ENCODE measurements at regions of chr12 and their contacts with region 1.

Region 1: DNA sequence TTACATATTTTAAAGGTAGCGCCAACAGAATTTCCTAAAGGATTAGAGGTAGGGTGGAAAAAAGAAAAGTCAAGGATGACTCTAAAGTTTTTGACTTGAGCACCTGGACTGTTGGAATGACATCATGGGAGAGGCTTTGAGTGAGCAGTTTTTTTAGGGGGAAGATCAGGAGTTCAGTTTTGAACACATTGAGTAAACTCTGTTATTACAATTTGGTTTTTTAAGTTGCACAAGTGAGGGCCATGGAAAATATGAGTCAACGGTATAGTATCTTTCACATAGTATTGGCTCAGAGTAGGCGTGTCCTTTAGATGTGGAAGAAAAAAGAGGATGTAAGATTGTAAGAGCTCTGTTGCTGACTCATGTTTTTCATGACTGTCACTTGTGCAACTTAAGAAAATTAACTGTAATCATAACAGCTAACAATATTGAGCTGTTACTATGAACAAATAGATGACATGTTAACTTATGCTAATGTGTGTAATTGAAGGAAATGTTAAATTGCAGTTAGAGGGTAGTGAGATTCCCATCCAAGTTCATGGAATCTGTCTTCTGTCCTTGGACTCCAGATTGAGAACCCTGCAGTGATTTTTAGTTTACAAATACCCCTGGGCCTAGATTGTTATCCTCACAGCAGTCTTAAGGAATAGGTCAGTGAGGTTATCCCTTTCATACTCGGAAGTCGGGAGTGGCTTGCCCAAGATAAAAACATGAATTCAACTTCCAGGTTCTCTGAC is 48.1 kb upstream of the ATP2B1 start:
- DNase-seq: peak; percentile 99
- H3K4me3 ChIP-seq: no peak overlapping the region
- H3K27ac ChIP-seq: peak overlapping the region; percentile 99
- H3K4me1 ChIP-seq: peaks cover 18% of the 10 kb centered on the region
- H3K27me3 ChIP-seq: no peaks in the 10 kb centered on the region
- CTCF ChIP-seq: no peak

Region 2: DNA sequence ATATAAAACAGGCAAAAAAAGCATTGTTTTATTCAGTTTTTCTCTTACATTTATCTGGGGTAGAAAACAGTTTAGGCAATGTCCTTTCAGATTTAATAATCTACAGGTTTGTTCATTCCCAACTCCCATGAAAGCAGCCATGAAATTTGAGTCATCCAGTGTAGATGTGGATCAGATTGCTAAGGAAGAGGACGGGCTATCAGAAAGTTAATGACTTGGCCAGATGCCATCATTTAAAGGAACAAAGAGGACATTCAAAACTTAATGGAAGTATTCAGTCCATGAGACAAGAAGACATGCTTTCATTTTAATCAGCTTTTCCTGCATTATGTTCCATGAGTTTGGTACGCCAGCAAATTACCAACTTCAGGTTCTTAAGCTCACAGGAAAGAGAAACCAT is 199.8 kb before region 1 on chr12:
- CTCF ChIA-PET with region 1: no interaction called
- dilution Hi-C with region 1: no loop called
- in situ Hi-C with region 1: no loop called
- intact Hi-C with region 1: no loop called
- DNase-seq: peak; percentile 69
- H3K4me3 ChIP-seq: no peak overlapping the region
- H3K27ac ChIP-seq: no peak overlapping the region
- H3K4me1 ChIP-seq: peaks cover 8% of the 10 kb centered on the region
- H3K27me3 ChIP-seq: no peaks in the 10 kb centered on the region
- CTCF ChIP-seq: no peak

Region 3: DNA sequence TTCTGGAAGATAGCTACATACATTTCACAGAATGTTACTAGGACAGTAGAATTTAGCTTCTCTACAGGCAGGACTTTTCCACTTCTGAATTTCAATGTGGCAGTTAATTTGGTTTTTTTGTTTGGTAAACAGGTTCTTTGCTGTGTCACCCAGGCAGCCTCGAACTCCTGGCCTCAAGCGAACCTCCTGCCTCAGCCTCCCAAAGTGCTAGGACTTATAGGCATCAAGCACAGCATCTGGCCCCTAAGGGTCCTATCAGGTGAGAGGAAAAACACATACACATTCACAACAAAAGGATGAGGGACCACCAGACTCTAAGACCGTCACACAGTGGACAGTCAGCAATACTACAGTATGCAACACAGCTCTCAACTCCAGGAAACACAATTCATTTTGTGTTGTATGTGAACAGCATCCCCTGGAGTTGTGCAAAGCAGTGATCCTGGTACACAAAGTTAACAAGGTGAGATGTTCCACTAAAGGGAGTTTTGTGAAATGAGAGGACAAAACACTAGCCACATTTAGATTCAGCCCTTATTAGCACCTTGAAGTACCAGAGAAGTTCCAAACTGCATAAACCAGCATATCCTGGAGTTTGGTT is 55.0 kb before region 1 on chr12:
- CTCF ChIA-PET with region 1: no interaction called
- dilution Hi-C with region 1: no loop called
- in situ Hi-C with region 1: no loop called
- intact Hi-C with region 1: no loop called
- DNase-seq: no peak
- H3K4me3 ChIP-seq: no peak overlapping the region
- H3K27ac ChIP-seq: no peak overlapping the region
- H3K4me1 ChIP-seq: peaks cover 12% of the 10 kb centered on the region
- H3K27me3 ChIP-seq: no peaks in the 10 kb centered on the region
- CTCF ChIP-seq: no peak

Region 4: DNA sequence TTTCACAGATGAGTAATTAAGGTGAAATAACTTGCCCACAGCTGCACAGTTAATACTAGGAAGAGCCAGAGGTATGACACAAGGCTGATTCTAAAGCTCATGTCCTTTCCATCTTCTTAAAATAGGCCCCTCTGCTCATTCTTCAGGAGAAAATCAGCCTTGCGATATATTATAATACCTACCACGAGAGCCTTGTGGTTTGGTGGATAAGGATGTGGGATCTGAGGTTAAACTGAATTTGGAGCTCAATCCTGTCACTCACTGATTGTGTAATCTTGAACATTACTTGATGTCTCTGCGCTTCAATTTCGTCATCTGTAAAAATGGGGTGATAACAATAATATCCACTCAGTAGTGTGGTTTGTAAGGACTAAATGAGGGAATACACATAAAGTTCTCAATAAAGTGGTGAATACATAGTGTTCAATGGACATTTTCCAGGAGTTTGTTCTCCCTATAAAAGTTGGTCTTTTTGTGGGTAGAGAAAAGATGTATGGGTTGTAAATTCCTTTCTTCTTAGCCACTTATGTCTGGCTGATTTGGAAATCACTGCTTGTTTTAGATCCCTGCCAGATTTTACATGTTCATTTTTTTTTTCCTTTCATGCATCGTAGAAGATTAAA is 23.1 kb before region 1 on chr12:
- CTCF ChIA-PET with region 1: no interaction called
- dilution Hi-C with region 1: no loop called
- in situ Hi-C with region 1: no loop called
- intact Hi-C with region 1: loop called (anchors 1 kb)
- DNase-seq: peak; percentile 96
- H3K4me3 ChIP-seq: no peak overlapping the region
- H3K27ac ChIP-seq: peak overlapping the region; percentile 81
- H3K4me1 ChIP-seq: peaks cover 25% of the 10 kb centered on the region
- H3K27me3 ChIP-seq: no peaks in the 10 kb centered on the region
- CTCF ChIP-seq: no peak

Region 5: DNA sequence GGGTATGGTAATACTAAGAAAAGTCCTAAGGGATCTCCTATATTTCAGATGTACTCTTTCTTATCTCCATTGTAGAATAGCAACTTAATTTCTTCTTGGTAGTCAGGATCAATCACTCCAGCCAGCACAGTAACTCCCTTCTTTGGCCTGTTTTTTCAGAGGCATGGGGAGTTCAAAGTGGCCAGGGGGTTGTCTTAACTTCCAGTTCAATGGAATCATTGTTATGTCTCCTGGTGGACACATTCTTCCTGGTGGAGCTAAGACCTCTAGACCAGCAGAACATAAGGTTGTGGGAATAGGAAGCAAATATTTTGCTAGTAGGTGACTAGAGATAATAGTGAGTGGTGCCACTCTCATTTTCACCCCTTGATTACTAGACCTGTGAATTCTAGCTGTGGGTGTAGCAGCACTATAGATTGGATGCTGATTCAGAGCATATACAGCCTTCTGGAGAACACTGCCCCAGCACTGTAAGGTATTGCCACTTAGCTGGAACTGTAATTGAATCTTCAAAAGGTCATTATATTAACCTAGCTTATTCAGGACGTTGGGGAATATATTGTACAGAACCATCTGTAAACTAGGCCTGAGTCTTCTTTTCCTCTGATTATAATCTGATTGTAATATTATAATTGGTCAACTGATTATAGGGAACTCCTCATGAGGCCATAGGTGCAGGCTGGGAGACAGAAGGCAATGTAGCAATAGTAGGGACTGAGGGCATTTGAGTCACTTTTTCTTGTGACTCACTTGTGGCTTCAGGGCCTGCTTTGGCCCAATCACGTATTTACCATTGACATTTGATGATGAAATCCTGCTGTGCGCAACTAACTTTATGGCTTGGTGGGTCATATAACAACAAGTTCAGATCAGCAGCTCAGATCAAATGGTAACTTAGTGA is 12.1 kb after region 1 on chr12:
- CTCF ChIA-PET with region 1: no interaction called
- dilution Hi-C with region 1: no loop called
- in situ Hi-C with region 1: no loop called
- intact Hi-C with region 1: loop called (anchors 1 kb)
- DNase-seq: peak; percentile 99
- H3K4me3 ChIP-seq: no peak overlapping the region
- H3K27ac ChIP-seq: peak overlapping the region; percentile 84
- H3K4me1 ChIP-seq: peaks cover 26% of the 10 kb centered on the region
- H3K27me3 ChIP-seq: no peaks in the 10 kb centered on the region
- CTCF ChIP-seq: no peak

Region 6: DNA sequence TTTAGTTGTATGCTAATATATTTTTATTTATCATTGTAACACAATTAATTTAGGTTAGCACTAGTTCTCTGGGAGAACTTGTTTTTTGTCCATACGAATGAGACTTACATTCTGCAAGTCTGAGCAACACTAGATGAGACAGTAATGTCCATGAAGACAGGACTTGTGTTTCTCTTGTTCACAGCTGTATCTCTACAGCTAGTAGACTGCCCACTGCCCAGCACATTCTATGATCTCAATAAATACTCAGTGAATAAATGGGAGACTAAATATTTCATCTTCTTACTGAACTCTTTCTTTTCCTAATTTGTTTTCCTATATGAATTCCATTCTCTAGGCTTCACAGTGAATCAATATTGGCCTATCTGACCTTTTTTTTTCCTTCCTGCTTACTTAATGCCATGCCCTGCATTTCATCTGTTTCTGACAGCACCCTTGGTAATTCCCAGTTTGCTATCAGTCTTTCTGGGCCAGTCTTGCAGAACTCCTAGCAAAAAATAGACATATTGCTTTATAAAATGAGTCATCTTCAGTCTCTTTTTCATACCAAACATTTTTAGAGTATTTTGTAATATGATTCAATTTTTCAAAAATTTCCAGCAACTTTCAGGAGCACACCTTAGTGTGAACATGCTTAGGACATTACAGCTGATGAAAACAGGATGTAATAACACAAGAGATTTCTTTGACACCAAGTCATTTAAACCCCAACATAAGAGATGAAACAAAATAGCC is 137.4 kb after region 1 on chr12:
- CTCF ChIA-PET with region 1: no interaction called
- dilution Hi-C with region 1: no loop called
- in situ Hi-C with region 1: no loop called
- intact Hi-C with region 1: loop called (anchors 1 kb)
- DNase-seq: peak; percentile 48
- H3K4me3 ChIP-seq: no peak overlapping the region
- H3K27ac ChIP-seq: no peak overlapping the region
- H3K4me1 ChIP-seq: peaks cover 14% of the 10 kb centered on the region
- H3K27me3 ChIP-seq: no peaks in the 10 kb centered on the region
- CTCF ChIP-seq: no peak

Region 7: DNA sequence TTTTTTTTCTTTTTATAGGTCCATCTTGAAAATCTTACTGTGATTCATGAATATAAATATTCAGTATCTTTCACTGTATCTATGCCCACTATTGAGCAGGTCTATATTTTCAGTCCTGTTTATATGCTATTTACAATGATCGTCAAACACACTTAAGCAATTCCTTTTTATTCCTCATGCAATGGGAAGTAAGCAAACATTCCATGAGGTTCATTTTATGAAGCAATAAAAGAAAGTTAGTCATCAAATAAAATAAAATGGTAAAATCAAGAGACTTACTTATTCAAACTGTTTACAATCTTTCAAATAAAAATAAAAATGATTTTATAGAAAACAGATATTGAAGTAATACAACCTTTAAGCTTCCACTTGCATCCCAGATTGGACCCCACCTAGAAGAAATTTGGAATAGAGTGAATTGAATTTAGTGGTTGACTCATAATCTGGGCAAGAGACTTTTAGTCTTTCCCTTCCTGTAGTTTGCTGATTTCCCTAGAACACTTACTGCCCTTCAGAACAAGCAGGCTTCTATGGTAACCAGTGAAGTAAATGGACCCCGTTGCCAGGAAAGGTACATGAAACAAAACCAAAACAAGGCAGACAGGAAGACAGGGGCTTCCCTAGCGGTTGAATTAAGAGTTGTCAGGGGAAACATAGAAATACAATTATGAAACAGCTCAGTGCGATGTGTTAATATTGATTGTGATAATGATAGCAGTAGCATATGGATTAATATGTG is 192.9 kb after region 1 on chr12:
- CTCF ChIA-PET with region 1: no interaction called
- dilution Hi-C with region 1: no loop called
- in situ Hi-C with region 1: loop called in 1 of 2 experiments (anchors 25 kb)
- intact Hi-C with region 1: loop called (anchors 1 kb)
- DNase-seq: peak; percentile 91
- H3K4me3 ChIP-seq: no peak overlapping the region
- H3K27ac ChIP-seq: peak overlapping the region; percentile 91
- H3K4me1 ChIP-seq: peaks cover 46% of the 10 kb centered on the region
- H3K27me3 ChIP-seq: no peaks in the 10 kb centered on the region
- CTCF ChIP-seq: peak; percentile 15 to 41

Region 8: DNA sequence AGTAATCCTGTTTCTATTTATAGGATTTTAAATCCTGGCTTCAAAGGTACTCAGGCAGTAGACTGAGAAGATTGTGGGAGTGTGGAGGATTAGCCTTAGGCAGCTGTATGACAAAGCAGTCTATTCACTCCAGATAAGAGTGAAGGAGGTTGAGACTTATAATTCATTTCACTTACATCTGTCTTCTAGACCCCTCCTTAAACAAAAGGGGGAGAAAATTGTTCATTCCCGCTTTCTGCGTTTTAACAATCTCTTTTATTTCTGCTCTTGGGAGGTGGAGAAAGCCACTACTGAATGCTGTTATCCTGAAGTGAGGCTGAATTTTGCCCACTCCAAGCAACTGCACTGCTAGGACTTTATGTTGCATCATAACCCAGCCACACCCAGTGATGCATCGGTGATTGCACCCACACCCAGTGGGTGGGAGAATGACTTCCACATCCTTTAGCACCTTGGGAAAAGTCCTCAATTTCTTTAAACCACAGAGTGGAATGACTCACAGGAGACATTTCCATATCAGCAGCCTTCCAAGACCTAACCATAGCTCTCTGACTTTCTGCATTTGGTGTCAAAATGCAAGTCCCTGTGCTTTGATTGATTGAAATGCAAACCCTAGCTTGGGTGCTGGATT is 334.4 kb after region 1 on chr12:
- CTCF ChIA-PET with region 1: no interaction called
- dilution Hi-C with region 1: no loop called
- in situ Hi-C with region 1: no loop called
- intact Hi-C with region 1: loop called (anchors 5 kb)
- DNase-seq: peak; percentile 98
- H3K4me3 ChIP-seq: peak overlapping the region in 1 of 3 experiments; percentile 25
- H3K27ac ChIP-seq: peak overlapping the region; percentile 96
- H3K4me1 ChIP-seq: peaks cover 17% of the 10 kb centered on the region
- H3K27me3 ChIP-seq: no peaks in the 10 kb centered on the region
- CTCF ChIP-seq: no peak

Region 9: DNA sequence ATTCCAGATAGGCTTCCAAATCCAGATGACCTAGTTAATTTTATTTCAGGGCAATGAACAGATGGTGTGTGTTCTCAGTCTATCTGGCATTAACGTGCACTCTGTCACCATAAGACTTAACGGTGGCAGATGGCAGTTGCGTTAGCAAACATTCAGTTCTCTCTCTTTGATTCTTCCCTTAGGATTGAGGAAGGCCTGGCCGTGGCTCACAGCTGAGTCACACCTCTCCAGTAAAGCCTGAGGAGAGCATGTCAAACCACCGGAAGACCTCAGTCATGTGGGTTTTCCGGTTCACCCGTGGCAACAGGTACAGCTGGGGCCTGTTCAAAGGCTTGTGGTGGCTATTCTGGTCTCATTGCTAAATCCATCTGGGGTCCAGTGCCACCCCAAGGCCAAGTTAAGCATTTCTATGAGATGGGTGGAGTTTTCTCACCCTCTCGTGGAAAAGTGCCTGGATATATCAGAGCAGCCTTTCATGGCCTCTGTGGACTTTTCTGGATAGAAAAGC is 497.0 kb after region 1 on chr12:
- CTCF ChIA-PET with region 1: no interaction called
- dilution Hi-C with region 1: no loop called
- in situ Hi-C with region 1: no loop called
- intact Hi-C with region 1: loop called (anchors 10 kb)
- DNase-seq: peak; percentile 97
- H3K4me3 ChIP-seq: no peak overlapping the region
- H3K27ac ChIP-seq: peak overlapping the region; percentile 45
- H3K4me1 ChIP-seq: peaks cover 24% of the 10 kb centered on the region
- H3K27me3 ChIP-seq: no peaks in the 10 kb centered on the region
- CTCF ChIP-seq: peak; percentile 46 to 55

Measured in mammary epithelial cell (primary cell).